ENCODE measurements at regions of chr4 and their contacts with region 1.

Region 1: GRCh38 chr4:1130316-1131186 is 17.2 kb upstream of the RNF212 start:
- DNase-seq: peak; percentile 73
- ATAC-seq: peak; percentile 96

Region 2: GRCh38 chr4:749698-750666 is 380.6 kb before region 1 on chr4:
- intact Hi-C with region 1: no loop called
- DNase-seq: no peak
- ATAC-seq: peak; percentile 71

Region 3: DNA sequence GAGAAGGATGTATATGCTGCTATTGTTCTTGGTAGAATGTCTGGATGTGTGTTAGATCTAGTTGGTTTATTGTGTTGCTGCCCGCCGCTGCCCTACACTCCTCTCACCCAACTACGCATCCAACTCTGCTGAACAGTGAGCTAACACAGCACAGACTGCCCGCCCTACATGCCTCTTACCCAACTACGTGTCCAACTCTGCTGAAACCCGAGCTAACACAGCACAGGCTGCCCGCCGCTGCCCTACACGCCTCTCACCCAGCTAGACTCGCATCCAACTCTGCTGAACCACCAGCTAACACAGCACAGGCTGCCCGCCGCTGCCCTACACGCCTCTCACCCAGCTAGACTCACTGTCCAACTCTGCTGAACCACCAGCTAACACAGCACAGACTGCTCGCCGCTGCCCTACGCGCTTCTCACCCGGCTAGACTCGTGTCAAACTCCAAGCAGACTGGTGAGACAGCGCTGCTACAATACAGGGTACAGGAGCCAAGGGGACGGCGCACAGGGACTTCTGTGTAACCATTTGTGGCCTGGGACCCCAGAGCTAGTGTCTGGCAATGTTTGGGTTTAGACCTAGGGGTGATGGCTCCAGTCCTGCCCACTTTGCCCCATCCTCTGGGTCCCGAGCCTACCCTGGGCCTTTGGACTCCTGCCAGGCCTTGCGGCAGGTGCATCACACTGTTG is 130.0 kb after region 1 on chr4:
- intact Hi-C with region 1: loop called (anchors 10 kb)
- DNase-seq: no peak
- ATAC-seq: no peak

Region 4: DNA sequence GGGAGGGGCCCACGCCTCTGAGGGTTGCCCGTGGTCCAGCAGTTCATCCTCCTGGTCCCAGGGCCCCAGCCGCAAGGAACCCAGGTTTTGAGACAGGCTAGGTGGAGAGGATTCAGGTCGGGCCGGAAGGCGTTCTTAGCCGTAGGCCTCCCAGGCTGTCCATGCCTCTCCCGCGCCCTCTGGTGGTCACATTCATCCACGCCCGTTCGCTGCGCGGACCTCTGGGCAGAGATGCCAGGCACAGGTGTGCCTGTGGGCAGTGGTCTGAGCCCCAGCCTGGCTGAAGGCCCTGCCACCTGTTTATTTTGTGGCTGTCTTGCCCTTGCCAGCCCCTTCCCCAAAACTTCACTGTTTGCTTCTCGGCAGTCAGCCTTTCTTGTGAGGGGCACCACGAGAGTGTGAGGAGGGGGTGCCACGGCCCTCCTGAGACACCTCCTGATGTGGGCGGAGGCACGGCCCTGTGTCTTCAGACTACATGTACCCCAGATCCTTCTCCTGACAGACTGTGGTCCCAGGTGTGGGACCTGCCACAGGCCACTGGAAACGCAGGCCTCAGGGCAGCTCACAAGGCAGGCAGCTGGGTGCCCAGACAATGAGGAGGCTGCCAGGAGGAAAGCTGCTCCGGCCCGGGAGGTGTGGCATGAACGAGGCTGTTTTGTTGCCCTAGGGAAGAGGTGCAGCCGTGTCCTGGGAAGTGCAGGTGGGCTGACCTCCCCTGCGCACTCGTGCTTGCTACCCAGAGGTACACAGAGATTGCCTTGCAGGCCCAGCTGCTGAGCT is 221.5 kb after region 1 on chr4:
- intact Hi-C with region 1: loop called (anchors 10 kb)
- DNase-seq: peak; percentile 91
- ATAC-seq: peak; percentile 17